Tibial artery (tissue), 4 donors: ENCODE measurements at regions of chr16 and their contacts with region 1.

Region 1: GRCh38 chr16:25106567-25107465 is 4.7 kb upstream of the LCMT1 start:
- DNase-seq: peak; percentile 95 to 97
- H3K4me3 ChIP-seq: peak overlapping the region; percentile 87 to 93
- H3K27ac ChIP-seq: peak overlapping the region; percentile 89 to 92
- H3K4me1 ChIP-seq: peaks cover 0 to 33% (median 23%) of the 10 kb centered on the region in 4 donors
- H3K27me3 ChIP-seq: no peaks in the 10 kb centered on the region
- CTCF ChIP-seq: peak in 1 of 2 experiments; percentile 11

Region 2: GRCh38 chr16:25051406-25052150 is 55.2 kb before region 1 on chr16:
- intact Hi-C with region 1: no loop called
- DNase-seq: no peak
- H3K4me3 ChIP-seq: peak overlapping the region; percentile 11 to 20
- H3K27ac ChIP-seq: peak overlapping the region; percentile 59 to 60
- H3K4me1 ChIP-seq: peaks cover 0 to 46% (median 10%) of the 10 kb centered on the region in 4 donors
- H3K27me3 ChIP-seq: no peaks in the 10 kb centered on the region
- CTCF ChIP-seq: no peak

Region 3: GRCh38 chr16:25066747-25067631 is 39.8 kb before region 1 on chr16:
- intact Hi-C with region 1: loop called (anchors 5 kb)
- DNase-seq: peak; percentile 71 to 92
- H3K4me3 ChIP-seq: peak overlapping the region; percentile 75 to 93
- H3K27ac ChIP-seq: peak overlapping the region; percentile 91 to 97
- H3K4me1 ChIP-seq: peaks cover 0 to 14% (median 8%) of the 10 kb centered on the region in 4 donors
- H3K27me3 ChIP-seq: no peaks in the 10 kb centered on the region
- CTCF ChIP-seq: no peak

Region 4: DNA sequence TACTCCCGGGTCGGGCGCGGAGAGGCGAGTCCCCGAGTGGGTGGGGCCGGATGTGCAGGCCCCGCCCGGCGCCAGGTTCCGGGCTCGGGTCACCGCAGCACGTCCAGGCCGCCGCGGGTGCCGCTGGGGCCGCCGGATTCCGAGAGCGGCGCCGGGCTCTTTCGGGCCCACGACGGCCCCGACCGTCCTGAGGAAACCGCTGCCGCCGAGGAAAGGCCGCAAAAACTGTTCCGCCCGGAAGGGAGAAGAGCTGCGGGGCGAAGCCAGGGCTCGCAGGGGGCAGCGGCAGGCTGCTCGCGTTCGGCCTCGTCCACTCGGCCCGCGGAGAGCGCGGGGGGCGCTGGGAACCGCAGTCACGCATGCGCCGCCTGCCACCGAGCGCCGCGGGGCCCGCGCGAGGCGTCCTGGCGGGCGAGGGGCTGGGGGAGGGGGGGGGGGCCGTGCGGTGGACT is 150.7 kb after region 1 on chr16 and contains the start of gene ZKSCAN2:
- intact Hi-C with region 1: loop called (anchors 10 kb)
- DNase-seq: peak; percentile 87 to 95
- H3K4me3 ChIP-seq: peak within 1 kb of the TSS; percentile 66 to 86
- H3K27ac ChIP-seq: peak within 1 kb of the TSS; percentile 88 to 98
- H3K4me1 ChIP-seq: peaks cover 0 to 42% (median 26%) of the 10 kb centered on the region in 4 donors
- H3K27me3 ChIP-seq: no peaks in the 10 kb centered on the region
- CTCF ChIP-seq: peak in 1 of 2 experiments; percentile 8